PC-3 (cell line): ENCODE measurements at regions of chr4 and their contacts with region 1.

Region 1: DNA sequence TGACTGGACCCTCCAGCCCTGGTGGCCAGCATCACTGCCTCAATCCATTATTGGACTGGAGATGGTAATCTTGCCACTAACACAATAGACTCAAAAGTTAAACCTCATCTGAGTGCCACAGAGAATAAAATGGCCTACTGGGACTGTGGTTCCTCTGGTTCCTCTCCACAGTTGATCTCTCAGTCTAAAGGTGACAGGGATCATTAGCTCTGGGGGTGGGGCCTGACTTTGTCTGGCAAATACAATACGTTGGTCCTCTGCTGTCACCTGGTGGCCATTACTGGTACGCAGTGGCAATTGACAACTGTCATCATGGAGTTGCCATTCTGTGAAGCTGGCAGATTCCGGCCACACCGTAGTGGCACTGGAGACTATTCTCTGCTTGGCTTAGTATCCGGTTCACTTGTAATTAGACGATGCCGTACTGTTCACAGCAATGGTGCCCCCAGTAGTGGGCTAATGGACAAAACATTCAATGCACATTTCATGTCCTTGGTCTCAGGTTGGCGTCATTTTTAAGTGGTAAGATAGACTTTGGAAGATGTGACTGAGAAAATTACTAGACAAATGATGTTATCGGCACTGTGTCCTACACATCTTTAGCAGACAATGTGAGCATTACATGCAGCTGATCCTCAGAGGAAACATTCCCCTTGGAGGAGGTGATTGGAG is 6.7 kb downstream of the FGFBP2 start:
- DNase-seq: peak; percentile 86
- ATAC-seq: peak; percentile 84
- H3K4me3 ChIP-seq: no peak overlapping the region
- H3K27ac ChIP-seq: peak overlapping the region; percentile 67
- H3K4me1 ChIP-seq: peaks cover 6% of the 10 kb centered on the region
- H3K27me3 ChIP-seq: no peaks in the 10 kb centered on the region
- CTCF ChIP-seq: peak; percentile 83

Region 2: GRCh38 chr4:15479089-15479912 is 477.0 kb before region 1 on chr4:
- CTCF ChIA-PET with region 1: interaction called, 7 read pairs
- POLR2A ChIA-PET with region 1: no interaction called
- intact Hi-C with region 1: loop called (anchors 1 kb)
- DNase-seq: peak; percentile 81
- ATAC-seq: peak; percentile 83
- H3K4me3 ChIP-seq: peak overlapping the region; percentile 75
- H3K27ac ChIP-seq: peak overlapping the region; percentile 76
- H3K4me1 ChIP-seq: peaks cover 8% of the 10 kb centered on the region; the same call in 1 of the 2 replicates
- H3K27me3 ChIP-seq: no peaks in the 10 kb centered on the region
- CTCF ChIP-seq: peak; percentile 75

Region 3: DNA sequence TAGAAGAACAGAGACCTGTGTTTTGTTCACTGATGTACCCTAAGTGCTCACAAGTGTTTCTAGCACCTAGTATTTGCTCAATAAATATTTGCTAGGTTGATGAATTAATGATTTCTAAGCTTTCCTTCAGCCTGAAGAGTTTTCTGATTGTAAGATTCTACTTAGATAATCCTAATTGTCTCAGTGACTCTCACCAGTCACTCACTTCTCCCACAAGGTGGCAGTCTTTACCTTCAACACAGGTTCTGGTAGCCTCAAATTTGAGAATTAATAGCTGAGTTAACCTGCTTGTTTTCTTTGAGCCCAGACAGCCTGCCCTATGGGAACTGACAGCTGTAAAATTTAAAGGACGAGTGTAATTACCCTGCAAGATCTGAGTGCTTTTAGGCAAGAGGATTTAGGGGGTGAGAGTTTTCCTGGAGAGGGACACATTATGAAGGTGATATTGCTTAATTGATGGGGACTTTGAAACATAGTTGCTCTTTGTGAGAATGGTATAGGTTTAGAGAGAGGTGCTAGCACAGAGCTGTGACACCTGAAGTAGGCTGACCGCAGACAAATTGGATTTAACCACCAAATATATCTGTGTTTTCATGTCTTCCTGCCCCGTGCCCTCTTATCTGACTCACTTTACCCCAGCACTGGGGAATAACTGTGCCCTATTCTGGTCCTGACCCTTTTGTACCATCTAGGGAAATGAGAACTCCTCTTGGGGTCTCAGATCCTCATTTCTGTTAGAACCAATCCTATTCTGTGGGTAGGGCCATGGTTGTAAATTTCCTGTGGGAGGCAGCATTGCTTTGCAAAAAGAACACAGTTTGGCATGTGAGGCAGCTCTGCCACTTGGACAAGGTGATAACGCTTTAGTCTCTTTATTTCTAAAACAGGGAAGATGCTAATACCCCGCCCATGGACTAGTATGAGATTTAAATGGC is 150.5 kb before region 1 on chr4:
- CTCF ChIA-PET with region 1: interaction called, 29 read pairs
- POLR2A ChIA-PET with region 1: no interaction called
- intact Hi-C with region 1: loop called (anchors 1 kb)
- DNase-seq: peak; percentile 79
- ATAC-seq: peak; percentile 85
- H3K4me3 ChIP-seq: peak overlapping the region; percentile 53; the same call in 1 of the 2 replicates
- H3K27ac ChIP-seq: no peak overlapping the region
- H3K4me1 ChIP-seq: 0 out of 2 replicates have a peak, but pooled peaks cover 4% of the 10 kb centered on the region
- H3K27me3 ChIP-seq: no peaks in the 10 kb centered on the region
- CTCF ChIP-seq: peak; percentile 76

Region 4: GRCh38 chr4:15906024-15906443 is 50.3 kb before region 1 on chr4:
- CTCF ChIA-PET with region 1: interaction called, 16 read pairs
- POLR2A ChIA-PET with region 1: interaction called, 4 read pairs
- intact Hi-C with region 1: no loop called
- DNase-seq: peak; percentile 96
- ATAC-seq: peak; percentile 96
- H3K4me3 ChIP-seq: 0 out of 2 replicates have a peak overlapping the region, but pooled peaks have one; percentile 19
- H3K27ac ChIP-seq: peak overlapping the region; percentile 98
- H3K4me1 ChIP-seq: peaks cover 21% of the 10 kb centered on the region
- H3K27me3 ChIP-seq: no peaks in the 10 kb centered on the region
- CTCF ChIP-seq: no peak

Region 5: DNA sequence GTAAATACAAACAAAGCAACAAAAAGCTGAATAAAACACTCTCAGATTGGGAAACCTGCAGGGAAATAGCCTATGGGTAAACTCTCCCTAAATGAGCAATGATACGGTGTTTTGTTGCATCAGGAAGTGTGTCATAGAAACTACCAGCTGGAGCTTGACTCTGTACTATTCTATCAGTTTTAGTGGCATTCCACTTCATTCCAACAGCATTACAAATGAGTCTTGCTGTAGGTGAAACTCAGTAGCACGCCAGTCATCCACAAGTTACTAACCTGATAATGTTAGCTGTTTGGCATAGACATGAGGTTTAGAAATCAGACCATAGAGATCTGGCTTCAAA is 42.7 kb before region 1 on chr4:
- CTCF ChIA-PET with region 1: interaction called, 4 read pairs
- POLR2A ChIA-PET with region 1: no interaction called
- intact Hi-C with region 1: loop called (anchors 2 kb)
- DNase-seq: peak; percentile 94
- ATAC-seq: peak; percentile 93
- H3K4me3 ChIP-seq: no peak overlapping the region
- H3K27ac ChIP-seq: peak overlapping the region; percentile 99
- H3K4me1 ChIP-seq: peaks cover 49% of the 10 kb centered on the region
- H3K27me3 ChIP-seq: no peaks in the 10 kb centered on the region
- CTCF ChIP-seq: no peak

Region 6: GRCh38 chr4:15938182-15938581 is 18.1 kb before region 1 on chr4:
- CTCF ChIA-PET with region 1: interaction called, 10 read pairs
- POLR2A ChIA-PET with region 1: no interaction called
- intact Hi-C with region 1: no loop called
- DNase-seq: peak; percentile 88
- ATAC-seq: peak; percentile 91
- H3K4me3 ChIP-seq: peak overlapping the region; percentile 71
- H3K27ac ChIP-seq: peak overlapping the region; percentile 72
- H3K4me1 ChIP-seq: peaks cover 37% of the 10 kb centered on the region
- H3K27me3 ChIP-seq: no peaks in the 10 kb centered on the region
- CTCF ChIP-seq: no peak

Region 7: GRCh38 chr4:16001484-16001858 is 45.2 kb after region 1 on chr4:
- CTCF ChIA-PET with region 1: no interaction called
- POLR2A ChIA-PET with region 1: no interaction called
- intact Hi-C with region 1: loop called (anchors 2 kb)
- DNase-seq: peak; percentile 75
- ATAC-seq: peak; percentile 95
- H3K4me3 ChIP-seq: no peak overlapping the region
- H3K27ac ChIP-seq: no peak overlapping the region
- H3K4me1 ChIP-seq: no peaks in the 10 kb centered on the region
- H3K27me3 ChIP-seq: no peaks in the 10 kb centered on the region
- CTCF ChIP-seq: peak; percentile 83